ENCODE measurements at regions of chr14 and their contacts with region 1.

Region 1: GRCh38 chr14:35416108-35416750 is 11.7 kb upstream of the NFKBIA start:
- DNase-seq: no peak
- ATAC-seq: no peak
- H3K4me3 ChIP-seq: no peak overlapping the region
- H3K4me1 ChIP-seq: no peaks in the 10 kb centered on the region
- CTCF ChIP-seq: no peak

Region 2: GRCh38 chr14:35134328-35135123 is 281.7 kb before region 1 on chr14:
- intact Hi-C with region 1: loop called in 1 of 2 experiments (anchors 5 kb)
- DNase-seq: no peak
- ATAC-seq: no peak
- H3K4me3 ChIP-seq: no peak overlapping the region
- H3K4me1 ChIP-seq: no peaks in the 10 kb centered on the region
- CTCF ChIP-seq: no peak

Region 3: DNA sequence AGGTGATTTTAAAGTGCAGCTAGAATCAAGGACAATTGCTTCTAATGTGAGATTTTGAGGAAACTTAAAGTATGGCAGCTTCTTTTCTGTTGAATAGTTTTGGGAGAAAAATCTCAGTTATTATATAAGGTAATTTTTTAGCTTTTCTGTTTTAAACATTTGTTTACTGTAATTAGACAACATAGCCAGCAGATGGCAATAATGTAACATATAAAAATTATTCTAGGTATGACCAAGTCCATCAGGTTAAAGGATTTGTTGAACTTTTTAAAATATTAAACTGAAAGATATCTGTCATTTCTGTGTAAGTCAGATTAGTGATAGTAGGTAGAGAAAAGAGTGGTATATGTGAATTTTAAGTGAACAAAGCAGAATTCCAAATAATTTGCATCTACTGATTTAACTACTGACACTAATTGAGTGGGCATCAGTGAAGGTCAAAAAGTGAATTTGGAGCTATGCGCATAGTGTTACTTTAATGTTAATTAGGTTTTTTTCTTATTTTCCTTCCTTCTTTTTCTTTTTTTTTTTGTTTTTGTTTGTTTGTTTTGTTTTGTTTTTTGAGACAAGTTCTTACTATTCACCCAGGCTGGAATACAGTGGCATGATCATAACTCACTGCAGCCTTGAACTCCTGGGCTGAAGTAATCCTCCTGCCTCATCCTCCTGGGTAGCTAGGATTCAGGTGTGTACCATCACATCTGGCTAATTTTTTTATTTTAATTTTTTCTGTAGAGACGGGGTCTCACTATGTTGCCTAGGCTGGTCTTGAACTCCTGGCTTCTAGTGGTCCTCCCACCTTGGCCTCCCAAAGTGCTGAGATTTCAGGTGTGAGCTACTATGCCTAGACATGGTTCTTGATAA is 275.3 kb before region 1 on chr14:
- intact Hi-C with region 1: loop called (anchors 5 kb)
- DNase-seq: no peak
- ATAC-seq: no peak
- H3K4me3 ChIP-seq: no peak overlapping the region
- H3K4me1 ChIP-seq: no peaks in the 10 kb centered on the region
- CTCF ChIP-seq: no peak

Region 4: GRCh38 chr14:35229495-35230089 is 186.6 kb before region 1 on chr14:
- intact Hi-C with region 1: loop called in 1 of 2 experiments (anchors 10 kb)
- DNase-seq: no peak
- ATAC-seq: peak; percentile 39
- H3K4me3 ChIP-seq: no peak overlapping the region
- H3K4me1 ChIP-seq: no peaks in the 10 kb centered on the region
- CTCF ChIP-seq: no peak

Measured in mucosa of descending colon (tissue), 3 donors.